ENCODE measurements at regions of chr21 and their contacts with region 1.

Region 1: DNA sequence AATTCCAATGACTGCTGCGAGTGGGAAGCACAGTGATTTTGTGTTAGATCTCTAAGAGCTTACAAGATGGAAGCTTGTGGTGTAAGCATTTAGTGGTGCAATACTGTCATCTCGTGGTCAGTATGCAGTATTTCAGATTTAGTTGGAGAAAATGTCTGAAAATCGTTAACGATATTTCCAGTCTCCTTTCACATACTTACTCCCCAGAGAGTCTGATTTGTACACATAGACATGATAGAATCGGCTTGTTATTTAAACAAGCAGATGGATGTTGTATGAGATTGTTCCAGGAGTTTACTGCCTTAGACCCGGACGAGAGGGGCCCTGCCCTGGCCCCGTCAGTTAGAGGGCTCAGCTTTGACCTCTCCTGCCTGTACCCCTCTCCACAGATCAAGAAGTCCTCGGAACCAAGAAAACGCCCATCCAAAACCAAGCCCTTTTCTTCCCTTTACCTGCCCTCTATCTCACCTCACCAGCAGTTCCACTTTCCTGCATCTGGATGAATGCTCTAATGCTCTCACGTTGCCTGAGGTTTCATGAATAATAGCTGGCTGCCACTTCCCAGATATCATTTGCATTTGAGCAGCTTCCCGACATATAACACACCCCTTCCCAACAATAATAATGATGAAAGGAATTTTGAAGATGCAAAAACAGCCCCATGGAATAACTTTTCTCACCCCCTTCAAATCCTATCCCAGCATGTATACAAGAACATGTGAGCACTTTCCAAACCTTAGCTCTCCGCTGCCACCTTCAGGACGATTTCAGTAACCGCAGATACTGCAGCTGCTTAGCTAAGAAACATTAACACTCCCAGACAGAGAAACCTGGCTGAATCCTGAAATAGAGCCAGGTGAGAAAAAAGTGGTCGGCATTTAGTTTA is 247.3 kb downstream of the LTN1 start:
- DNase-seq: peak; percentile 87
- H3K4me3 ChIP-seq: peak overlapping the region; percentile 33 to 55 (median 46)
- H3K27ac ChIP-seq: peak overlapping the region; percentile 68 to 84 (median 74)
- H3K4me1 ChIP-seq: peaks cover 0 to 34% (median 14%) of the 10 kb centered on the region in 4 donors
- H3K27me3 ChIP-seq: no peaks in the 10 kb centered on the region
- CTCF ChIP-seq: peak; percentile 89 to 99 (median 96)
- EP300 ChIP-seq: no peak
- POLR2A ChIP-seq: no peak

Region 2: GRCh38 chr21:26850108-26850643 is 1895.2 kb before region 1 on chr21:
- intact Hi-C with region 1: loop called (anchors 2 kb)
- DNase-seq: no peak
- H3K4me3 ChIP-seq: no peak overlapping the region
- H3K27ac ChIP-seq: no peak overlapping the region
- H3K4me1 ChIP-seq: peaks cover 0 to 10% (median 3%) of the 10 kb centered on the region in 4 donors
- H3K27me3 ChIP-seq: no peaks in the 10 kb centered on the region
- CTCF ChIP-seq: peak; percentile 71 to 92 (median 83)
- EP300 ChIP-seq: no peak
- POLR2A ChIP-seq: no peak

Region 3: DNA sequence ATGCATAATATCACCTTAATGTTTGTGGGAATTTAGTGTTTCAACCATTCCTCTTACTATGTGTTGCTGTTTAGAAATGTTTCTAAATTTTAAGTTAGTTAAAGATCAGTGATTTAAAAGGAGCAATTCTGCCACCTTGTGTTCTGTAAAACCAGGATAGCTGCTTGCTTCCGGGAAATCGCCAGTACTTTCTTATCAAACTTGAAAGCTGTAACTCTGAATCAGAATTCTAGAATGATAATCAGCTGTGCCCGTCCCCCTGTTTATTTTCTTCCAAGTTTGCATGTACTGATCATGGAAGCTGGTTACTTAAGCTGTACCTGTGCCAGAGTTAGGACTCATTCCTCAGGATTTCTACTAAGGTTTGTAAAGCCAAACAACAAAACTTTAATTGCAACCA is 409.1 kb before region 1 on chr21:
- intact Hi-C with region 1: loop called (anchors 2 kb)
- DNase-seq: no peak
- H3K4me3 ChIP-seq: no peak overlapping the region
- H3K27ac ChIP-seq: no peak overlapping the region
- H3K4me1 ChIP-seq: peaks cover 0 to 10% (median 3%) of the 10 kb centered on the region in 4 donors
- H3K27me3 ChIP-seq: no peaks in the 10 kb centered on the region
- CTCF ChIP-seq: peak in 3 of 4 experiments; percentile 28 to 40 (median 34)
- EP300 ChIP-seq: no peak
- POLR2A ChIP-seq: no peak

Region 4: DNA sequence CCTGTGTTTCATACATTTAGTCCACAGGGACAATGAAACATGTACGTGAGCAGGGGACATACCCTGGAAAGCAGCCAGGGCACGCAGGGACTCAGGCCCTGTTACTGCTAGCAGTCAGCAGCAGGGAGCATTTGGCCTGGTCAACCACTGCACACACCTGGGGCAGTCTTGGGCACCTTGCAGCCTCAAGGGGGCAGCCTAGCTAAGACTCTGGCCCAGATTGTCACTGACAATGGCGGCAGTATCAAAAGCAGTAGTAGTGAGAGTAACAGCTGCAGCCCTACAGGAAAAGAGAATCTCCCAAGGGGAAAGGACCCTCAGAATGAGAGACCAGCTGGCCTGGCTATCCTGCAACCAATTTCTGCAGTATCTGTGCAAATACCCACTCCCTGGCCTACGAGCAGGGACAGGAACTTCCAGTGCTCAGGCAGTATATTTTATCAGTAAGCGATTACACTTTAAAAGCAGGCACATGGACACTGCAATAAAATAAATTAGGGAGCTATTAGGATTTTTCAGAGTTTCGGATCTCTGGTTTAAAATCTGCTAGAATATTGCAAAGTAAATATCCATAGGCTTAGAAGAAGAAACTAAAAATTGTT is 228.3 kb before region 1 on chr21:
- intact Hi-C with region 1: loop called (anchors 2 kb)
- DNase-seq: peak; percentile 71
- H3K4me3 ChIP-seq: no peak overlapping the region
- H3K27ac ChIP-seq: no peak overlapping the region
- H3K4me1 ChIP-seq: no peaks in the 10 kb centered on the region
- H3K27me3 ChIP-seq: no peaks in the 10 kb centered on the region
- CTCF ChIP-seq: peak in 3 of 4 experiments; percentile 30 to 56 (median 54)
- EP300 ChIP-seq: no peak
- POLR2A ChIP-seq: no peak

Region 5: DNA sequence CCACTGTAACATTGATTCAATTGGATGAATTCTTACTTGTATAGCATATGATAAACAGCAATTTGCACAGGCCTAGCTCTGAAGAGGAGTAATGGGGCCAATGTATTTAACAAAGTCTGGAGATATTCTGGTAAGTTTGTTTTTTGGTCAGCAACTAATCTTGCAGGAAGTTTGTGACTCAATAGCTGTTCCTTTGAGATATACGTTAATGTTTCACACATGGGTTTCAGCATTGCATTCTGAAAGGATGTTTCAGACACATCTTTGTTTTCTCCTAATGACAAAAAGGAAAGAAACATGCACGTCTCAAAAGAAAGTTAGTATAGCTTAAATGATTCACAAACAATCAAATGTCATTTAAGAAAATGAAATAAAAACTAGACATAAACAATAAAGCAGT is 198.3 kb after region 1 on chr21:
- intact Hi-C with region 1: loop called (anchors 2 kb)
- DNase-seq: no peak
- H3K4me3 ChIP-seq: no peak overlapping the region
- H3K27ac ChIP-seq: no peak overlapping the region
- H3K4me1 ChIP-seq: peaks cover 0 to 5% (median 0%) of the 10 kb centered on the region in 4 donors
- H3K27me3 ChIP-seq: no peaks in the 10 kb centered on the region
- CTCF ChIP-seq: no peak
- EP300 ChIP-seq: no peak
- POLR2A ChIP-seq: no peak